Posterior cingulate gyrus (tissue), 11 donors: ENCODE measurements at regions of chr13 and their contacts with region 1.

Region 1: GRCh38 chr13:44969551-44970484 is 19.5 kb downstream of the NUFIP1 start:
- DNase-seq: no peak

Region 2: DNA sequence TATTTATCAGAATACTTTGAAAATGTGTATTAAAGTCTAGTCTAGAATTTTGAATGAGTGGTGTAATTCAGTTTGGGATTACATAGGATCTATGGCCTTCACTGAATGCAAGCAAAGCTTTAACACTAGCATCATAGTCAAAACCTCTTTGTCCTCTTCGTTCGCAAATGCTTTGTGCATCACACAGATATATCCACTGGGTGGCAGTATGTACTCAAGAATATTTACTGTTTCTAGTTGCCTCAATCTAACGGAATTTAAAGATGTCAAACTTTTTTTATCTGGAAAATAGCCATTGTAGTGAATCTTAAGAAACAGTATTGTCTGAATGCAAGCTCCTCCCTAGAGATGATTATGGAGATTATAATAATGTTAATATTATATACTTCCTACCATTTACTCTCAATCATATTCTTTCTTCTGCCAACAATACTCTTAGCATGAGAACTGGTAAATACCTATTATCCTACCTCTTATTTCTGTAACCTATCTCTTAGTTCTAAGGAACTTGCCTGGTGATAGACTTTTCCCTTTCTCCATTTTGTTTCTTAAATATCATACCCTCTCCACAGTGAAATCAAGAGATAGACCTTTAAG is 1064.3 kb before region 1 on chr13:
- intact Hi-C with region 1: loop called (anchors 5 kb)
- DNase-seq: peak in 1 of 10 donors; percentile 22

Region 3: GRCh38 chr13:44484562-44485138 is 485.2 kb before region 1 on chr13:
- intact Hi-C with region 1: loop called (anchors 1 kb)
- DNase-seq: no peak

Region 4: DNA sequence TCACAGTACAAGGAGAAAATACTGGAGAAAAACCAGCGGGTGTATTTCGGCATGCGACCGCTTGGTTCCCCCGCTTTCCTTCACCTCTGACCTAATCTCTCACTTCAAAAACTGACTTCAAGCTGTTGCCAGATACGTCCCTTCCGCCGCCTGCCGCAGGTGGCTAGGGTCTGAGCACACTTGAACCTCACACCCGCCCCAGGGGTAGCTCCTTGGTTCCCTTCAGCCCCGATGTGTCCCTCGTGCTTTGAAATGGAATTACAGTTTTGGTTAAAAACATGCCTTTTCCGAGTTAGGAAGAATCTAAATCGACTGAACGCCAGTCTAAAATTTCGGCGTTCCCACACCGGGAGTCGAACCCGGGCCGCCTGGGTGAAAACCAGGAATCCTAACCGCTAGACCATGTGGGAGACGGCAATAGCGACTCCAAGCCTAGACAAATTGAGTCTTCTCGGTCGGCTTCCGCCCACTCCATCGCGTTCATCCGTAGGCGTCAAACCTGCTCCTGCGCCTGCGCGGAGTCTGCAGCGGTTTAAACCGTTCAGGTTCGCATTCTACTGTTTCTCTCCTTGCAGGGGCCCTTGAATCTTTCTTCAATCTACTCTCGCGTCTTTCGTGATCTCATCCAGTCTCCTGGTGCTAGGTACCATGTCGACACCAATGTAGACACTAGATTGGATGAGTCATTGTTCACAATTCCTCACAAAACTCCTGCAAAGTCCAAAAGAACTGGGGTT is 52.1 kb before region 1 on chr13:
- intact Hi-C with region 1: loop called (anchors 10 kb)
- DNase-seq: peak; percentile 91 to 99 (median 96)

Region 5: GRCh38 chr13:45047394-45048310 is 77.8 kb after region 1 on chr13:
- intact Hi-C with region 1: loop called (anchors 2 kb)
- DNase-seq: peak; percentile 66 to 97 (median 82)

Region 6: DNA sequence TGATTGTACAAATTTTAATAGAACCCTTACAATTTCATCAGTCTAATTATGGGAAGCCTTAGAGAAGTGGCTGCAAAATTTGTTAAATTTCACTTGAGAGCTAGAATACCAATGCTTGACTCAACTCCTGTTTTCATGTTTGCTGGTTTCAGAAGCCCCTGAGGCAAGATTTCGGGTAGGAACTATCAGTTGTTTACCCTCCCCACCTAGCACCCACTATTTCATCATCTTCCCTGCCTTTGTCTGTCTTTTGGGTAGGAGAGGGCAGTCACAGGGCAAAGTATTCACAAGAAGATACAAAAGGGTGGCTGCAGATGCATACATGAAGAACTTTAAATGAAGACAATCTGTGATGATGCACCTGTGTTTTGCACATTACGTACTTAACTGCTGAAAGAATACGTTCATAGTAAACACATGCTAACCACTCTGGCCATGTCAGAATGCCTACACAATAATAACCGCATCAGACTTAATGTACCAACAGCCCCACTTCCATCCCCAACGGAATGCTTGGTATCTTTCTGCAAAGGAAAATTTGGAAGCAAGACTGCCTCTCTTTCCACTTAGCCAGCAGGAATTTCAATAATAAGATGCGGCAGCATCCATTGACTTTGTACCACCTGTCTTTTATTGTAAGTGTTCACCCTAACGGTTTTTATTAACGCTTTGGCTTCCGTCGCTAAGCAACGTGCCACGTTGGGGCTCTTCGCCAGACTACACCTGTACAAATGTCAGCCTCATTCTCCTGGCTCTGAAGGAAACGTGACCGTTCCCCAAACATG is 340.7 kb after region 1 on chr13:
- intact Hi-C with region 1: loop called (anchors 5 kb)
- DNase-seq: no peak